ENCODE measurements at regions of chr6 and their contacts with region 1.

Region 1: DNA sequence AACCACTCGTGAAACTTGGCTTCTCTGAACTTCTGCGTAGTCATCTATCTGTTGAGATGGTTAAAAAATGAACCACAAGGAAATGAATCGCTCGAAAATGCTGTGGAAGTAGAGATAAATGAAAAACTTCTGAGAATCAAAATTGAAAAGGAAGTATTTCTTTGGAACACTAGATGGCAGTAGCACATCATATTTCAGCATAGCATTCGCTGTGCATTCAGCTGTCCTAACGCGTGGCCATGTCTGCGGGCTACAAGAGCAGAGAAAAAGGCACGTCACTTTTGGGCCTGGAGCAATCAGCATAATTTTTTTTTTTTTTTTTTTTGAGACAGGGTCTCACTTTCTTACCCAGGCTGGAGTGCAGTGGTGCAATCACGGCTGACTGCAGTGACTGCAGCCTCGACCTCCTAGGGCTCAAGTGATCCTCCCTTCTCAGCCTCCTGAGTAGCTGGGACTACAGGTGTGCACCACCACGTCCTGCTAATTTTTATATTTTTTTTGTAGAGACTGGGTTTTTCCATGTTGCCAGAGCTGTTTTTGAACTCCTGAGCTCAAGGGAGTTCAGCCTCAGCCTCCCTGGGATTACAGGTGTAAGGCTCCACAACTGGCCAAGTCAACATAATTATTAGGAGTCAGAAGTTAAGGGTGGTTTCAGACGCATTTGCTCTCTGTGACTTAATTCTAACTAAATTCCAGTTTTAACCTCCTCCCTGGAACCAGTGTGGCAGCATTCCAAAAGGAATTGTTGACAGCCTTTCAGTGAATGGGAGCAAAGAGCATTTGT is 8.8 kb upstream of the PERP start:
- DNase-seq: peak; percentile 34 to 45
- ATAC-seq: peak; percentile 69 to 88 (median 82)
- H3K4me3 ChIP-seq: no peak overlapping the region
- H3K27ac ChIP-seq: no peak overlapping the region
- H3K4me1 ChIP-seq: peaks cover 0 to 7% (median 0%) of the 10 kb centered on the region in 9 donors
- H3K27me3 ChIP-seq: peaks cover 0 to 10% (median 5%) of the 10 kb centered on the region in 7 donors
- CTCF ChIP-seq: peak; percentile 63 to 84 (median 74)

Region 2: GRCh38 chr6:138211027-138211581 is 95.0 kb after region 1 on chr6:
- intact Hi-C with region 1: loop called in 1 of 10 experiments (anchors 10 kb)
- DNase-seq: no peak
- ATAC-seq: no peak
- H3K4me3 ChIP-seq: no peak overlapping the region
- H3K27ac ChIP-seq: no peak overlapping the region
- H3K4me1 ChIP-seq: peaks cover 0 to 12% (median 0%) of the 10 kb centered on the region in 9 donors
- H3K27me3 ChIP-seq: no peaks in the 10 kb centered on the region
- CTCF ChIP-seq: peak in 1 of 9 donors; percentile 22

Region 3: DNA sequence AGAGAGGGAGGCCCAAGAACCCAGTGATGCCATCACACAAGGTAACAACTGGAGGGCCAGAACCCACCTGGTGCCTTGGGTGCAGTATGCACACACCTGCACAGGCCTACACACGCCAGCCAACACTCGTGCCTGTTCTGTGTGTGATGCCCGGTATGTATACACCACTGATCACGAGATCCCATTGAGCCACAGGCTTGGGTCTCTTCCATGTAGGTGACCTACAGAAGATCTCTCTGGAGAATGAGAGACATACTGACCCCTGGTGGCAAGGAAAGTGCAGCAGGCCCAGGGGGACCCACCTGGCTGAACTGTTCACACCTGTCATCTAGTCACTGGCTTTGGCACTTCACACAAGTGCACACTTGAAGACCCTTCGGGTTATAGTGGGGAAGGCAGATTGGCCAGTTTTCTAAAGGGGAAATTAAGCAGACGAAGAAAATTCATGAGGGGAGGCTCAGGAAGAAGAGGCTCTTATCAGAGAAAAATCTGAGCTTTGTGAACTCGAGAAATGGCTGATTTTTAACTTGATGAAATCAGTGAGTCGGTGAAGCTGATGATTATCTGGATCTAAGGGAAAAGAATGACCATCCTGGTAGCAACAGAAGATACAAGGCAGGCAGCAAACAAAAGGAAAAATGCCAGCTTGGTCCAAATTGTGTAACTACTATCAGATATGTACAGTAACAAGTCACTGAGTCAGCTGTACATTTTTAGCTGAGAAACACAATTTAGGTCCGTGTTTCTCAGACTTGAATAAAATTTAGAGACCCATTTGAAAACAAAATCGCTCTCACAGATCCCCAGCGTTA is 171.3 kb after region 1 on chr6:
- intact Hi-C with region 1: loop called in 4 of 10 experiments (anchors 5 kb)
- DNase-seq: no peak
- ATAC-seq: peak in 5 of 8 donors; percentile 4 to 47 (median 28)
- H3K4me3 ChIP-seq: no peak overlapping the region
- H3K27ac ChIP-seq: no peak overlapping the region
- H3K4me1 ChIP-seq: no peaks in the 10 kb centered on the region
- H3K27me3 ChIP-seq: no peaks in the 10 kb centered on the region
- CTCF ChIP-seq: peak; percentile 10 to 65 (median 53)

Region 4: GRCh38 chr6:138428944-138429598 is 313.0 kb after region 1 on chr6:
- intact Hi-C with region 1: loop called in 1 of 10 experiments (anchors 10 kb)
- DNase-seq: no peak
- ATAC-seq: peak in 5 of 8 donors; percentile 32 to 55 (median 39)
- H3K4me3 ChIP-seq: peak overlapping the region in 5 of 10 donors; percentile 1 to 23 (median 18)
- H3K27ac ChIP-seq: peak overlapping the region in 9 of 10 donors; percentile 17 to 83 (median 55)
- H3K4me1 ChIP-seq: peaks cover 0 to 59% (median 32%) of the 10 kb centered on the region in 9 donors
- H3K27me3 ChIP-seq: no peaks in the 10 kb centered on the region
- CTCF ChIP-seq: peak; percentile 36 to 80 (median 61)

Region 5: DNA sequence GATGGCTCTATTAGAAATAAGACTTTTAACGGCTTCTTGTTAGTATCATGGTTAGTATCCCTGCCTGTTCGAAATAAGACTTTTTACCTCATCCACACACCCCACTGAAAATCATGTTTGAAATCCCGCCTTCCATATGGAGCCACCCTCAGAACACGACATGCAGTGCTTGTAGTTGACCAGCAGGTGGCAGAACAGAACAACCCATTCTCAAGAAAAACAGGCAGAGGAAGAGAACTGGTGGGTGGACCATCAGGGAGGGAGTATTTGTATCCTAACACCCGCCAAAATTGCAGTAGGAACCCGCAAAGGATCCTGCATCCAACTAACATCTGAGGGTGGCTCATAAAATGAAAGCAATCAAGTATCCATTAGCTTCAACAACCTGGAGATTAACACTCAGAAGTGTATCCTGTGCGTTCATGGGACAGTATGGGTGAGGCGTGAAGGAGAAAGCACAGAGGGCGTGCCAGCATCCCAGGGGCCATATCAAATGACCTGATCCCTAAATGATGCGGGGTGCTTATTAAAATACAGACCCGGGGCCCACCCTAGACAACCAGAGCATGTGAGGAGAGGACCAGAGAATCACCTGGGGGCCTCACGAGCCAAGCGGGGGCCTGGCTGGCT is 472.9 kb after region 1 on chr6:
- intact Hi-C with region 1: loop called (anchors 5 to 10 kb)
- DNase-seq: peak in 1 of 2 donors; percentile 73
- ATAC-seq: peak in 7 of 8 donors; percentile 39 to 68 (median 52)
- H3K4me3 ChIP-seq: no peak overlapping the region
- H3K27ac ChIP-seq: no peak overlapping the region
- H3K4me1 ChIP-seq: peaks cover 0 to 31% (median 8%) of the 10 kb centered on the region in 9 donors
- H3K27me3 ChIP-seq: no peaks in the 10 kb centered on the region
- CTCF ChIP-seq: peak; percentile 75 to 97 (median 92)